Activated CD4-positive, alpha-beta T cell treated with anti-CD3 and anti-CD28 coated beads, Interleukin-2, amount 10 ng/mL, durations not matched to agents 24 days and 14 days (primary cell): ENCODE measurements at regions of chr5 and their contacts with region 1.

Region 1: DNA sequence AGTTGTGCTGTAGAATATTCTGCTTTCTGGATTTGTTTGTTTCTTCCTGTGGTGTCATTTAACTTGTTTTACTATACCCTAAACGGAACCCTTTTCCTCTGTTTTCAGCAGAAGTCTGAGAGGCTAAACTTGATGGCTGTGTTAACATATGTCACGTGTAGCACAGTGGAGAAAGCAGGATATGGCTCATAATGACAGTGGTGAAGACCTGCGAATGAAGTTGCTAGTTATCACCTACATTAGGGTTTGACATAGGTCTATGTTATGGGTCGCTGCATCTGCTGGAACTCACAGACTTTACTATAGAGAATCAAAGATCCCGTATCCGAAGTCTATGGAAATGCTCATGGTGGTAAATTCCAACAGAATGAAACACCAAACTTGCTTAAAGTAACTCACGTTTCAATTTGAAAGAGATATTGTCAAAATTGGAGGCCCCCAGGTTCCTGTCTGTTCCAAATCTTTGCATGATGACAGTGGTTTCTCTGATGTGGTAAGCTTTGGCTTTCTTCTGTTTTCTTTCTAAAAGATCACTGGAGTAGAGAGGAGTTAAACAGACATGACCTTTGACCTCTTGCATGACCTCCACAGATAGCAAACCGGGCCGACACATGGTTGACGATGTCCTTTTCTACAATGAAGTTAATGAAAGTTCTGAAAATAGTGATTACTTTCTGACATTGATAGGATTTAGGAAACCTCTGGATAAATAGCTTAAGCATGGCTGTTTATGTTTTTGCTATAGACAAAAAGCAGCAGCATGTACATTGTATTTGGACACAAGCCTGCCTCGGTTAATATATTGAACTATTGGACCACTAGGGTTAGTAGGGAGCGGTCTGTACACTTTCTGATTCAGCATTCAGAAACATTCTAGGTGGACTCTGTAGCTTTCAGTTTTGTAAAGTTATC is 3.1 kb upstream of the CATSPER3 start:
- DNase-seq: peak; percentile 78
- H3K4me3 Mint-ChIP-seq: peak overlapping the region; percentile 53
- H3K27ac Mint-ChIP-seq: peak overlapping the region; percentile 75
- H3K4me1 Mint-ChIP-seq: peaks cover 23% of the 10 kb centered on the region
- H3K27me3 Mint-ChIP-seq: no peaks in the 10 kb centered on the region

Region 2: GRCh38 chr5:134370871-134371833 is 593.5 kb before region 1 on chr5 and contains the start of gene UBE2B:
- intact Hi-C with region 1: no loop called
- DNase-seq: peak; percentile 98
- H3K4me3 Mint-ChIP-seq: peak within 1 kb of the TSS; percentile 93
- H3K27ac Mint-ChIP-seq: peak within 1 kb of the TSS; percentile 93
- H3K4me1 Mint-ChIP-seq: peaks cover 42% of the 10 kb centered on the region
- H3K27me3 Mint-ChIP-seq: peaks cover 3% of the 10 kb centered on the region
- total RNA-seq, gene UBE2B: 108 and 109 TPM in 2 replicates

Region 3: DNA sequence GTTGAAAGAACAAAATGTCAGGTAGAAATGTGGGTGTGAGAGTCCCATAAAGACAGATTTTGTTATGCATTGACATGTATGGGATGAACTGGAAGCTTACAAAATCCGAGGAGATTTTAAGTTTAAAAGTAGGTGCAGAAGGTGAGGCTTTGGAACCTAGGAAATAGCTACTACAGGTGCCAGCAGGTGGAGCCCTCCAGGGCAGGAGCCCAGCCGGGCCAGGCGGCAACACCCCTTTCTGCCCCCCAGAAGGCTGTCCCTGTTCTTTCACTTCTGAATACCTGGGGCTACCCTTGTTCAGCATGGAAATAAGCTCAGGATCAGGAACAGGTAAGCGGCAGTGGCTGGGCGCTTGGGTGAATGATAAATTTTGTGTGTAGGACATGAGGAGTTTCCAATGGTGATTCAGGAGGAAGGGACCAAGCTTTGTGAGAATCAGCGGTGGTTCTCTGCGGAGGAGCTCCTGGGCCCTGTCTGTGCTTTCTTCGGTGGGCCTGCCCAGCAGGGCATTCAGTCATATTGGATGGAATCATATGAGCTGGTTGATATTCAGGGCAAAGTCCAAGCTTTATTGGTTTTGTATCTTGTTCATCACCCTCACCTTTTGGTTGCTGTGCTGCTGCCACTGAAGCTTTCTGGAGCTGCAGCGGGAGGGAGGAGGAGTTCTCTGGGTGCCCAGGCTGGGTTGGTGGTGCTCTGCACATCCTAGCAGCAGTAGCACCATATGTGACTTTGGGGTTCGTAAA is 47.4 kb before region 1 on chr5:
- intact Hi-C with region 1: loop called (anchors 1 kb)
- DNase-seq: no peak
- H3K4me3 Mint-ChIP-seq: no peak overlapping the region
- H3K27ac Mint-ChIP-seq: peak overlapping the region; percentile 31
- H3K4me1 Mint-ChIP-seq: peaks cover 30% of the 10 kb centered on the region
- H3K27me3 Mint-ChIP-seq: no peaks in the 10 kb centered on the region